Left cardiac atrium (tissue), 4 donors: ENCODE measurements at regions of chr15 and their contacts with region 1.

Region 1: GRCh38 chr15:65675551-65675950 is 53.8 kb downstream of the SLC24A1 start:
- DNase-seq: no peak
- ATAC-seq: no peak

Region 2: GRCh38 chr15:65723876-65724275 is 48.3 kb after region 1 on chr15:
- intact Hi-C with region 1: loop called in 1 of 2 experiments (anchors 10 kb)
- DNase-seq: no peak
- ATAC-seq: no peak